A673 (cell line): ENCODE measurements at regions of chr18 and their contacts with region 1.

Region 1: GRCh38 chr18:22200611-22201225 is 31.3 kb downstream of the GATA6 start:
- DNase-seq: no peak
- H3K4me3 ChIP-seq: no peak overlapping the region
- H3K27ac ChIP-seq: no peak overlapping the region
- H3K4me1 ChIP-seq: no peaks in the 10 kb centered on the region
- H3K27me3 ChIP-seq: peaks cover 40% of the 10 kb centered on the region
- CTCF ChIP-seq: no peak

Region 2: GRCh38 chr18:22176420-22177326 is 24.0 kb before region 1 on chr18:
- CTCF ChIA-PET with region 1: no interaction called
- POLR2A ChIA-PET with region 1: no interaction called
- intact Hi-C with region 1: no loop called
- DNase-seq: no peak
- H3K4me3 ChIP-seq: no peak overlapping the region
- H3K27ac ChIP-seq: no peak overlapping the region
- H3K4me1 ChIP-seq: no peaks in the 10 kb centered on the region
- H3K27me3 ChIP-seq: peaks cover 100% of the 10 kb centered on the region
- CTCF ChIP-seq: no peak

Region 3: DNA sequence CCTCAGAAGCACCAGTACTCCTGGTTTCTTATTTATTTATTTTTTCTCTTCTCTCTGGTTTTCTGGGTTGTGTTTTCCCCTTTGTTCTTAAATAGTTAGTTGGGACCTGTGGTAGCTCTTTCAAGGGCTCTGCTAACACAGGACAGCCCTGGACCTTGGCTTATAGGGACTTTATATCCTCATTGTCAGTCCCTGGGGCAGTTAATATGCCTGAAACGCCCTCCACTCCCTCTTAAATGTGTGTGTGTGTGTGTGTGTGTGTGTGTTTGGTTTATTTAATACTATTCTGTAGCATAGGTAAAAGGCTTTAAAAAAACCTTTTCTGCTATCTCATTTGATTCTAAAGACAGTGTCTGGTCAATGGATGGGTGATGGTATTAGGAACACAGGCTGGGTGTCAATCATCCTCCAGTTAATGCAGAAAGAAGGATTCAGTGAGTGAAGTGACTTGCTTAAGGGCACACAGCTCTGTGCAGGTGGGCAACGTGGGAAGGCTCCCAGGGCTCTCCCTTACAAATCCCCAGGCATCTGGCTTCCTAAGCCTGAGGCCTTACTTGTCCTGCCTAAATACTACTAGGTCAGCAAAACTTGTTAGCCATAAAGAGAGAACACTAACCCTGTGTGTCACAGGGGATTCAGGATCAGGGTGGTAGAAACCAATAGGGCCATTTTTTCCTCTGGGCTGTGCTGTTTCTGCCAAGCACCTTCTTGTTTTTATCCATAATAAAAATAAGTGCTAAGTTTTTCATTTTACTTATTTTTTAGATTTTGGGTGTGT is 23.4 kb after region 1 on chr18:
- CTCF ChIA-PET with region 1: no interaction called
- POLR2A ChIA-PET with region 1: no interaction called
- intact Hi-C with region 1: loop called (anchors 2 kb)
- DNase-seq: no peak
- H3K4me3 ChIP-seq: no peak overlapping the region
- H3K27ac ChIP-seq: no peak overlapping the region
- H3K4me1 ChIP-seq: no peaks in the 10 kb centered on the region
- H3K27me3 ChIP-seq: peaks cover 11% of the 10 kb centered on the region
- CTCF ChIP-seq: no peak

Region 4: DNA sequence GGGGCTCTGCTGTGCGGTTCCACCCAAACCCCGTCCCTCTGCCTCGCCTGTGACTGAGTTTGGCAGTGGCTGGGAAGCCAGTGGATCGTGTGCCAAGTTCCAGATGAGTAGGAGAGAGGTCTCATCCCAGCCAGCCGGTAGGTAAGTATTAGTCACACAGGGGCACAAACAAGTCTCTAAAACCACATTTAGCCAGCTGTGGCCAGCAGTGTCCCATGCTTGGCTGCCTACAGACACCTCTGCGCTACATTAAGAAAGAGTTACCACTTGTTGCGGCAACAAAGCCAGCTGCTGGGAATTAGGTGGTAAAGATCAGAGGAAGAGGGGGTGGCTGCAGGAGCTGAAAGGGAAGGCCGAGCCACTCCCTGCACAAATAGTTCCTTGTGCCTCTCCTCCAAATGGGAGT is 49.9 kb after region 1 on chr18:
- CTCF ChIA-PET with region 1: no interaction called
- POLR2A ChIA-PET with region 1: no interaction called
- intact Hi-C with region 1: loop called (anchors 5 kb)
- DNase-seq: no peak
- H3K4me3 ChIP-seq: no peak overlapping the region
- H3K27ac ChIP-seq: no peak overlapping the region
- H3K4me1 ChIP-seq: no peaks in the 10 kb centered on the region
- H3K27me3 ChIP-seq: peaks cover 53% of the 10 kb centered on the region
- CTCF ChIP-seq: no peak